Common myeloid progenitor, CD34-positive (primary cell): ENCODE measurements at regions of chr1 and their contacts with region 1.

Region 1: DNA sequence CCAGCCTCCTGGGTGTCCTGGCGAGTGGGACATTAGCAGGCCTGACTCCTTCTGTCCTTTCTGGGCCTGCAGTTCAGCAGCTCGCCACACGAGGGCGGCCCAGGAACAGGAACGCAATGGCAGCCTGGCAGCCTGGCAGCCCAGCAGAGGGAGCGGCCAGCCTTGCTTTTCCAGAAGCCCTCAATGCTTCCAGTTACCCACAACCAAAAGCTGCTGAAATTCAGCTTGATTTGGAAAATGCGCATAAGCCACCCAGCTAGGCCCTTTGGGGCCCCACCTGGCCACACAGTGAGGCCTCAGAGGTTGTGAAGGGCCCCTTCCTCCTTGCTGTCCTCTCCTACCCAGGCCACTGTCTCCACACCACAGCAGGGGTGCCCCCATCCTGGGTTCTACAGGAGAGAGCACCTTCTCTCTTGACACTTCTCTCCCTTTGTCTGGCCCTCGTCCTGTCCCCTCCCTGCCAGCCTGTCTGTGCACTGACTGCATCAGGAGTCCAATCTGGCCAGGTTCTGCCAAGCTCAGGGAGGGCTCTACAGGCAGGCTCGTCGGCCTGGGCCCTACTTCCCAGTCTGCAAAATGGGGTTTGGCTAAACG is 103.4 kb upstream of the VAMP3 start:
- DNase-seq: peak; percentile 79 to 85 (median 80)
- H3K4me3 ChIP-seq: no peak overlapping the region
- H3K27ac ChIP-seq: no peak overlapping the region
- H3K4me1 ChIP-seq: peaks cover 0 to 14% (median 8%) of the 10 kb centered on the region in 4 experiments
- H3K27me3 ChIP-seq: peaks cover 0 to 2% (median 0%) of the 10 kb centered on the region in 5 experiments

Region 2: GRCh38 chr1:7646981-7647901 is 20.5 kb before region 1 on chr1:
- CTCF ChIA-PET with region 1: interaction called, 70 read pairs
- POLR2A ChIA-PET with region 1: no interaction called
- DNase-seq: peak; percentile 49 to 62 (median 58)
- H3K4me3 ChIP-seq: no peak overlapping the region
- H3K27ac ChIP-seq: no peak overlapping the region
- H3K4me1 ChIP-seq: peaks cover 0 to 78% (median 52%) of the 10 kb centered on the region in 4 experiments
- H3K27me3 ChIP-seq: no peaks in the 10 kb centered on the region

Region 3: GRCh38 chr1:7694600-7695496 is 27.1 kb after region 1 on chr1:
- CTCF ChIA-PET with region 1: interaction called, 10 read pairs
- POLR2A ChIA-PET with region 1: no interaction called
- DNase-seq: no peak
- H3K4me3 ChIP-seq: no peak overlapping the region
- H3K27ac ChIP-seq: no peak overlapping the region
- H3K4me1 ChIP-seq: no peaks in the 10 kb centered on the region
- H3K27me3 ChIP-seq: peaks cover 0 to 2% (median 0%) of the 10 kb centered on the region in 5 experiments

Region 4: GRCh38 chr1:7727809-7728471 is 60.2 kb after region 1 on chr1:
- CTCF ChIA-PET with region 1: interaction called, 14 read pairs
- POLR2A ChIA-PET with region 1: no interaction called
- DNase-seq: no peak
- H3K4me3 ChIP-seq: no peak overlapping the region
- H3K27ac ChIP-seq: no peak overlapping the region
- H3K4me1 ChIP-seq: peaks cover 5 to 31% (median 8%) of the 10 kb centered on the region in 4 experiments
- H3K27me3 ChIP-seq: no peaks in the 10 kb centered on the region

Region 5: DNA sequence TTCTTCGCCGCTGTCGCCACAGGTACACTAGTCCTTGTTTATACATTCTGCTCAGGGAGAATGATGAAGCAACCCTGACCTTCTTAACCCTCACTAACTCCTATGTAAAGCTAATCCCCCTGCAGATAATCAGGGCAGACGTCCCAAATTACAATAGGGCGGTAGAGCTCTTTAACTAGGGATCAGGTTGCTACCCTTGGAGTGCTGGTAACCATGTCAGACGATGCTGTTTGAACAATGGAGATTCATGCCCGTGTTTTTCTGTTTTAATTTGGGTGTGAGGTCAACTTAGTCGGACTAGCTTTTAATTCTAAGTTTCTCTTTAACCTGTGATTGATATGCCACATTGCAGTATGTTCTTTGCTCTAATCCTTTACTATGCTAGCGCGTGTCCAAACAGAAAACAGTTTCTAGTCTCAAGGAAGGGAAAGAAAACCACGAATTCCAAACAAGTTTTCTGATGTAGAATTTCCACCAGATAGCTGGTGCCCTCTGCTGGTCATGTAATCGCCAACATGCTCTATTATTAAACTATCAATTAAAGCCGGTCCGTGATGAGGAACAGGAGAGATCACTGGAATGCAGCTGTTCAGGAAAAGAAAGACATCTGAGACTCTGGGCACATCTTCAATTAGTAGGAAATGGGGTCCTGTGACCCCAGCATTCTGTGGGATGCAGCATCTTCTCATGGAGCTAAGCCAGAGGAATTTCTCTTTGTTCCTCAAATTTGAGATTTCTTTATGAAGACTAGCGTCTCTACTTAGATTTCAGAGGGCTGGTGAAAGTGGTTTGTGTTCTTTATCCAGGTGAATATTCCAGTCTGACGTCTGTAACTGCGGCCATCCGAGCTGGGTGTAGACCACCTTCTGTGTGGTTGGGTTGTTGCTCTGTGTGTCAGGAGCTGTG is 85.0 kb after region 1 on chr1:
- CTCF ChIA-PET with region 1: interaction called, 536 read pairs
- POLR2A ChIA-PET with region 1: no interaction called
- DNase-seq: peak; percentile 61 to 72 (median 68)
- H3K4me3 ChIP-seq: peak overlapping the region in 5 of 7 experiments; percentile 44 to 65 (median 61)
- H3K27ac ChIP-seq: no peak overlapping the region
- H3K4me1 ChIP-seq: peaks cover 12 to 45% (median 20%) of the 10 kb centered on the region in 4 experiments
- H3K27me3 ChIP-seq: no peaks in the 10 kb centered on the region

Region 6: GRCh38 chr1:7922301-7922700 is 254.6 kb after region 1 on chr1:
- CTCF ChIA-PET with region 1: no interaction called
- POLR2A ChIA-PET with region 1: no interaction called
- DNase-seq: no peak
- H3K4me3 ChIP-seq: no peak overlapping the region
- H3K27ac ChIP-seq: no peak overlapping the region
- H3K4me1 ChIP-seq: no peaks in the 10 kb centered on the region
- H3K27me3 ChIP-seq: peaks cover 0 to under 1% (median 0%) of the 10 kb centered on the region in 5 experiments